ENCODE measurements at regions of chrX and their contacts with region 1.

Region 1: DNA sequence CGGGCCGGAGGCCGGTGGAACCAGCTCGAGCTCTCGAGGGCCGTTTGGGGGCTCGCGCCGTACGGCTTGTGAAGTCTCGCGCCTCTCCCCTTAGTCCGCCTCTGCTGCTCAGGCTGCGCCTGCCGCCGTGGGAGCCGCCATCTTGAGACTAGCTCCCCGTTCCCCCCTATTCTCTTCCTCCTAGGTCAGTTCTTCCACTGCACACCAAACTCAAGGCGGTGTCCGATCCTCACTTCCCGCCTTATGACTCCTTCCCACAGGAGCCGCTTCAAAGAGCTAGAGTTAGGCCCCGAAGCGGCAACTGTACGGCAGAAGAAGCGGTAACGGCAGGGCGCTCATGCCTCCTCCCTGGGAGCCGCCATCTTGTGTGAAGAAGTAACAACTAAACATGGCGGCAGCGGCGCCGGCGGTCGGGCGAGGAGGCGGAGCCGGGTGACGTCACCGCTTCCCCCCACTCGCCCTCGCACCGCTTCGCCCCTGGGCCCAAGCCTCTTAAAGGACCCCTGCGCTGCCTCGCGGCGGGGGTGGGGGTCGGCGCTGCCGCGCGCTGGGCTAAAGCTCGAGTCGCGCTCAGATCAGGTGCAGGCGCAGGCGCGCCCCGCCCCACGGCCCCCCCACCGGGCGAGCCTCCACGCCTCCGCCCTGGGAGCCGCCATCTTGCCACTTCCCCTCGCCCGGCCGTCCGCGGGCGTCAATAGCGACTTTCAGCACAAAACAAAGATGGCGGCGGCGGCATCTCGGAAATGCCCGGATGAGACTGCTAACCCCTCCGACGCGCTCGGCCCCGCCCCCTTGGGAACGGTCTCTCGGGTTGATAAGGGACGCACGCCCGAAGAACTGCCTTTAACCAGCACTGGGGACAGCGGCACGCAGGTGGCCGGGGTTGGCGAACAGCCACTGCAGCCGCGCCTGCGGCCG is at the start of gene HCFC1:
- DNase-seq: peak; percentile 92
- H3K4me3 ChIP-seq: peak within 1 kb of the TSS; percentile 78
- H3K27ac ChIP-seq: peak within 1 kb of the TSS; percentile 89
- H3K4me1 ChIP-seq: peaks cover 37% of the 10 kb centered on the region
- CTCF ChIP-seq: no peak
- total RNA-seq, gene HCFC1: 51.9 and 64.2 TPM in 2 replicates

Region 2: DNA sequence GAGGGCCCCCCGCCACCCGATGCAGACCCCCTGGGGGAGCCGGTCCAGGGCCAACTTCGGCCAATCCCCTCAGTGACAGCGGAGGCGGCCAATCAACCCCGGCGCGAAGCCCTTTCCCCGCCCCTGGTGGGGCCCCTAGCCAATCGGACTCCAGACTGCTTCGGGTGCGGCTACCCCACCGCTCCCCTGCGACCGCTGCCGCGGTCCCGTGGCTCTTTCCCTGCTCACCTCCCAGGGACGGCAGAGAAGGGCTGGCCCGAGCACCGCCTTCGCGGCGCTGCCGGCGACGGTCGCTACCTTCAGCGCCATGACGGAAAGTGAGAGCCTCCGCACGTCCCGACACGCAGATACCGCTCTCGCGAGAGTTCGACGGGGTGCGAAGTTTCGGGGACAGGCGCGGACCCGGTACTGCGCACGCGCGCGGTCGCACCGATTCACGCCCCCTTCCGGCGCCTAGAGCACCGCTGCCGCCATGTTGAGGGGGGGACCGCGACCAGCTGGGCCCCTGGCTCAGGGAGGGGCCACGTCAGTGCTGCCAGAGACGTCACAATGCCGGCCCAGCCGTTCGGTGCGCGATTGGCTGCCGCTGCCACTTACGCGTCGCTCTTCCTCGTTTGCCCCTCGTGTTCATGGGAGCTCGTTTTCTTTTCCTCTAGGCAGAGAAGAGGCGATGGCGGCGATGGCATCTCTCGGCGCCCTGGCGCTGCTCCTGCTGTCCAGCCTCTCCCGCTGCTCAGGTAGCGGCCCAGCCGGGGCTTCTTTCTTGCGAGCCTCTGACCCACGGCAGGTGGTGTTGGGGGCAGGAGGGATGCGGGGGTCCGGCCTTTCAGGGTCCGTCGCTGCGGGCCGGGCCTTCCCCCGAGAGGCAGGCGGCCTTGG is 177.5 kb before region 1 on chrX and contains the starts of genes IDH3G and SSR4:
- CTCF ChIA-PET with region 1: no interaction called
- POLR2A ChIA-PET with region 1: interaction called, 3 read pairs
- intact Hi-C with region 1: loop called (anchors 5 kb)
- DNase-seq: peak; percentile 94
- H3K4me3 ChIP-seq: peak within 1 kb of the TSS; percentile 100
- H3K27ac ChIP-seq: peak within 1 kb of the TSS; percentile 66
- H3K4me1 ChIP-seq: peaks cover 14% of the 10 kb centered on the region
- CTCF ChIP-seq: no peak
- total RNA-seq, gene IDH3G: 52.5 and 53.2 TPM in 2 replicates
- total RNA-seq, gene SSR4: 121 and 165 TPM in 2 replicates

Region 3: GRCh38 chrX:153981771-153982533 is 10.2 kb after region 1 on chrX:
- CTCF ChIA-PET with region 1: no interaction called
- POLR2A ChIA-PET with region 1: no interaction called
- intact Hi-C with region 1: no loop called
- DNase-seq: no peak
- H3K4me3 ChIP-seq: no peak overlapping the region
- H3K27ac ChIP-seq: no peak overlapping the region
- H3K4me1 ChIP-seq: peaks cover 11% of the 10 kb centered on the region
- CTCF ChIP-seq: no peak

Region 4: GRCh38 chrX:154019633-154020528 is 48.2 kb after region 1 on chrX and contains the start of gene IRAK1:
- CTCF ChIA-PET with region 1: no interaction called
- POLR2A ChIA-PET with region 1: interaction called, 4 read pairs
- intact Hi-C with region 1: loop called (anchors 1 kb)
- DNase-seq: peak; percentile 73
- H3K4me3 ChIP-seq: peak within 1 kb of the TSS; percentile 97
- H3K27ac ChIP-seq: peak within 1 kb of the TSS; percentile 76
- H3K4me1 ChIP-seq: peaks cover 29% of the 10 kb centered on the region
- CTCF ChIP-seq: no peak
- total RNA-seq, gene IRAK1: 56.8 and 75.5 TPM in 2 replicates

Region 5: GRCh38 chrX:154030266-154030665 is 58.6 kb after region 1 on chrX:
- CTCF ChIA-PET with region 1: no interaction called
- POLR2A ChIA-PET with region 1: no interaction called
- intact Hi-C with region 1: no loop called
- DNase-seq: no peak
- H3K4me3 ChIP-seq: no peak overlapping the region
- H3K27ac ChIP-seq: no peak overlapping the region
- H3K4me1 ChIP-seq: no peaks in the 10 kb centered on the region
- CTCF ChIP-seq: no peak

Region 6: GRCh38 chrX:154378782-154379591 is 407.3 kb after region 1 on chrX and contains the start of gene EMD:
- CTCF ChIA-PET with region 1: no interaction called
- POLR2A ChIA-PET with region 1: no interaction called
- intact Hi-C with region 1: loop called (anchors 1 kb)
- DNase-seq: peak; percentile 97
- H3K4me3 ChIP-seq: peak within 1 kb of the TSS; percentile 88
- H3K27ac ChIP-seq: peak within 1 kb of the TSS; percentile 69
- H3K4me1 ChIP-seq: peaks cover 32% of the 10 kb centered on the region
- CTCF ChIP-seq: no peak
- total RNA-seq, gene EMD: 25.3 and 35.4 TPM in 2 replicates

Region 7: DNA sequence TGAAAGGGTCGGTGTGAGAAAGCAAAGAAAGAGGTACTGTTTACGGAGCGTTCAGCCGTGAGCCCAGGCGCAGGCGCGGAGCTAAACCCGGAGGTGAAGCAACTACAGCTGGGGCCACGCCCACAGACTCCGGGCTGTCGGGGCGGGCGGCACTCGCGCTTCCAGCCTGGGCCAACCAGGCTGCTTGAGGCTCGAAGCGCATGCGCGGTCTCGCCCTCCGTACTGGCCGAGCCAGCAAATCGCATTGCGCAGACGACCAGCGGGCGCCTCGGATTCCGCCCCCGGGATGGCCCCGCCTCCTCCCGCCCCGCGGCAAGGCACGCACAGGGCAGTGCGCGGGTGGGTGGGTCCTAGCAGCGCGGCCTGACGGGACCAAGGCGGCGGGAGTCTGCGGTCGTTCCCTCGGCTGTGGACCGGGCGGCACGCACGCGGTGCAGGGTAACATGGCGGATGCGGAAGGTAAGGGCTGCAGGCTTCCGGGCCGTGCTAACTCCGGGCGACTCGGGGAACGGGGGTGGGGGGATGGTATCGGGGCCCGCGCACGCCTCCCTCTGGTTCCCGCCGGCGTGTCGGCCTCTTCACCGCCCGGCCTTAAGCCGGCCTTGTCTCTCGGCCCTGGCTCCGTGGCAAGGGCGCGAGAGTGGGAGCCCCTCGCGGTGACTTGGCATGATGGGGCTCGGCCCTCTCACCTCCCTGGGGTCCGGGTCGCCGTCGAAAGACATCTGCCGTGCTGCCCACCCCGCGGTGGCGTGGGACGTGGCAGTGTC is 791.0 kb after region 1 on chrX and contains the start of gene DKC1:
- CTCF ChIA-PET with region 1: no interaction called
- POLR2A ChIA-PET with region 1: no interaction called
- intact Hi-C with region 1: loop called (anchors 5 kb)
- DNase-seq: peak; percentile 96
- H3K4me3 ChIP-seq: peak within 1 kb of the TSS; percentile 100
- H3K27ac ChIP-seq: peak within 1 kb of the TSS; percentile 88
- H3K4me1 ChIP-seq: peaks cover 18% of the 10 kb centered on the region
- CTCF ChIP-seq: no peak
- total RNA-seq, gene DKC1: 67.7 and 93.3 TPM in 2 replicates